Right ventricle myocardium superior (tissue), 1 donor: ENCODE measurements at regions of chr14 and their contacts with region 1.

Region 1: GRCh38 chr14:102314242-102315011 is 5.1 kb upstream of the ZNF839 start:
- DNase-seq: peak; percentile 90
- ATAC-seq: peak; percentile 73

Region 2: DNA sequence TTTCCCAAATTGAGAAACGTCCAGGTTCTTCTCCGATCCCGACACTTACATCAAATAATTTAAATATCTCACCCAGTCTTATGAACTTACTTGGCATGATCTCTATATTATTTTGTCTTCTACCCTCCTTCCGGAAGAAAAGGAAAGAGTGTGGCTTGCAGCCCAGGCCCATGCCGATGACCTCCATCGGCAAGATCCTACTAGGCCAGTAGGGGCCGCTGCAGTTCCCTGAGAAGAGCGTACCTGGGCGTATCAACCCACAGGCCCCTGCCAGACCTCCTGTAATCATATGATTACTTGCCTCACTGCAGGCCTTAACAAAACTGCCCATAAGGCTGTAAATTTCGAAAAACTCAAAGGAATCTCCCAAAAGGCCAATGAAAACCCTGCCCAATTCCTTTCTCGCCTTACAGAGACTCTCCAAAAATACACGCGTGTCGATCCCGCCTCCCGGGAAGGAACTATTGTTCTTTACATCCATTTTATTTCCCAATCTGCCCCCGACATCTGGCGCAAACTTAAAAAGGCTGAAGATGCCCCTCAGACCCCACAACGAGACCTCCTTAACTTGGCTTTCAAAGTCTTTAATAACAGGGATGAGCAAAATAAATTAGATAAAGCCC is 79.0 kb before region 1 on chr14:
- intact Hi-C with region 1: loop called (anchors 2 kb)
- DNase-seq: peak; percentile 92
- ATAC-seq: peak; percentile 97

Region 3: DNA sequence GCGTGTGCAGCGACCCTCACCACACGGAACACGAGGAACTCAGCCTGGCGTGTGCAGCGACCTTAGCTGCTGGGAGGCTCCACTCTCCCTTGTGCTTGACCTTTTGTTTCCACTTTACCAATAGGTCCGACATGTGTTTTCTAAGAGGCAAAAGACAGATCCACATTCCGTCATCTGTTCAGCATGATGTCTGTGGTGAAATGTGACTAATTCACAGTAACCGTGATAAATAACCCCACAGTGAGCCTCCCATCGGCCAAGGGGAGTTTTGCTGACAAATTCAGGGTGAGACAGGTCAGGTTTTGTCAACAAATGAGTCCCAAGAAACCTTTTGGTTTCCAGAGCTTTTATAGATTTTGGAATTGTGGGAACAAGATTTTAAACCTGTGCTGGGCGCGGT is 65.4 kb before region 1 on chr14:
- intact Hi-C with region 1: no loop called
- DNase-seq: no peak
- ATAC-seq: no peak